Activated naive CD4-positive, alpha-beta T cell treated with anti-CD3 and anti-CD28 coated beads for 36 hours (primary cell): ENCODE measurements at regions of chr15 and their contacts with region 1.

Region 1: GRCh38 chr15:90320061-90320884 is 31.8 kb upstream of the ZNF774 start:
- DNase-seq: peak; percentile 75
- H3K4me3 Mint-ChIP-seq: no peak overlapping the region
- H3K27ac Mint-ChIP-seq: no peak overlapping the region
- H3K4me1 Mint-ChIP-seq: peaks cover 4% of the 10 kb centered on the region
- H3K27me3 Mint-ChIP-seq: no peaks in the 10 kb centered on the region

Region 2: GRCh38 chr15:89828241-89829082 is 491.8 kb before region 1 on chr15:
- CTCF ChIA-PET with region 1: no interaction called
- intact Hi-C with region 1: no loop called
- DNase-seq: no peak
- H3K4me3 Mint-ChIP-seq: no peak overlapping the region
- H3K27ac Mint-ChIP-seq: no peak overlapping the region
- H3K4me1 Mint-ChIP-seq: no peaks in the 10 kb centered on the region
- H3K27me3 Mint-ChIP-seq: peaks cover 2% of the 10 kb centered on the region

Region 3: GRCh38 chr15:90291679-90292356 is 28.5 kb before region 1 on chr15:
- CTCF ChIA-PET with region 1: interaction called, 21 read pairs
- intact Hi-C with region 1: loop called (anchors 2 kb)
- DNase-seq: peak; percentile 28
- H3K4me3 Mint-ChIP-seq: no peak overlapping the region
- H3K27ac Mint-ChIP-seq: no peak overlapping the region
- H3K4me1 Mint-ChIP-seq: peaks cover 6% of the 10 kb centered on the region
- H3K27me3 Mint-ChIP-seq: no peaks in the 10 kb centered on the region

Region 4: GRCh38 chr15:90306560-90306959 is 13.7 kb before region 1 on chr15:
- CTCF ChIA-PET with region 1: interaction called, 44 read pairs
- intact Hi-C with region 1: no loop called
- DNase-seq: peak; percentile 68
- H3K4me3 Mint-ChIP-seq: no peak overlapping the region
- H3K27ac Mint-ChIP-seq: no peak overlapping the region
- H3K4me1 Mint-ChIP-seq: peaks cover 29% of the 10 kb centered on the region
- H3K27me3 Mint-ChIP-seq: no peaks in the 10 kb centered on the region

Region 5: DNA sequence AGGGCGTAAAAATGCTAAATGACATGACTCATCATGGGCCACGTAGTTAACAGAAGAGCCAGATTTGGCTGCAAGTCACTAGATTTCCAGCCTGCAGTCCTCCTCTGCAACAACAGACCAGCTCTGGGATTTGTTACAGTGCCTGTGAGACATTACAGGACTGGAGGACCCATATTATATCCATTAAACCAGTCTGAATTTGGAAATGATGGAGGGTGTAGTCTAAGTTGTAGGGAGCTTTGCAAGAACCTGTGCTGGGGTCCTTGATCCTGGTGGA is 42.6 kb after region 1 on chr15:
- CTCF ChIA-PET with region 1: interaction called, 11 read pairs
- intact Hi-C with region 1: loop called (anchors 5 kb)
- DNase-seq: no peak
- H3K4me3 Mint-ChIP-seq: no peak overlapping the region
- H3K27ac Mint-ChIP-seq: no peak overlapping the region
- H3K4me1 Mint-ChIP-seq: peaks cover 21% of the 10 kb centered on the region
- H3K27me3 Mint-ChIP-seq: no peaks in the 10 kb centered on the region

Region 6: DNA sequence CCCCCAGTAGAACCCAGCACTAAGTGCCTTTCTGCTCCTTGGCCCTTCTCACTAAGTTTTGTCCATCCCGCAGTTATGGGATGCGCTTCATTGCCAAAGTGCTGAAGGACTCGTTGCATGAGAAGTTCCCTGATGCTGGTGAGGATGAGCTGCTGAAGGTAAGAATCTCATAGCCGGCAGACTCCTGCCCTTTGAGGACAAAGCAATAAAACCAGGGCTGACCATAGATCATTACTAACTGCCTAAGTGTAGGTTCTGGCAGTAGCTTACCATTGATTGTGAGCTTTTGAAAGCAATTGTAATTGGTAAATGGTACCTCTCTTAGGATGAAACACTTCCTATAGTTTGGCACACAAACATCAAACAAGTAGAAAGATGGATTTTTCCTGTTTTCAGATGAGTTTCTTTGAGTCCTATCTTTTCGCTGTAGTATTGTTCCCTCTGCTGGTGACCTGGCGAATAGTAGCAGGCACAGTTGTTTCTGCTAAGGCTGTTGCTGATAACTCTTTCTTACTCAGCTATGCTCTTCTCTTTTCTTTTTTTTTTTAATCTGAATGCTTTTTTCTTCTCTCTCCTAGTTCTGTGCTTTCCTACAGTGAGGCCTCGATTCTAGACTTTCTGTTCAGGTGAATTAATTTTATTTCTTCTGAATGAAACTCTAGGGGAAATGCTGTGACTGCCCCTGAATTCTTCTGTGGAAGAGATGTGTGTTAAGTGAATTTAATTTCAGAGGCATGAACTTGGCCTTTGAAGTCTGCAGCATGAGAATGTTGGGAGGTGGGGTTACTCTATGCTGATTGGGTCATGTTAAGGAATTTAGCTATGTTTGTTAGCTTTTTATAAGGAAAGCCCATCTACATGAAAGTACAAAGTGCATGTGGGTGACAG is 162.1 kb after region 1 on chr15:
- CTCF ChIA-PET with region 1: interaction called, 82 read pairs
- intact Hi-C with region 1: loop called (anchors 1 kb)
- DNase-seq: peak; percentile 74
- H3K4me3 Mint-ChIP-seq: no peak overlapping the region
- H3K27ac Mint-ChIP-seq: no peak overlapping the region
- H3K4me1 Mint-ChIP-seq: peaks cover 16% of the 10 kb centered on the region
- H3K27me3 Mint-ChIP-seq: no peaks in the 10 kb centered on the region

Region 7: GRCh38 chr15:90603893-90604292 is 283.6 kb after region 1 on chr15:
- CTCF ChIA-PET with region 1: interaction called, 6 read pairs
- intact Hi-C with region 1: loop called (anchors 1 kb)
- DNase-seq: peak; percentile 82
- H3K4me3 Mint-ChIP-seq: no peak overlapping the region
- H3K27ac Mint-ChIP-seq: no peak overlapping the region
- H3K4me1 Mint-ChIP-seq: peaks cover 42% of the 10 kb centered on the region
- H3K27me3 Mint-ChIP-seq: no peaks in the 10 kb centered on the region

Region 8: GRCh38 chr15:90686435-90687218 is 366.4 kb after region 1 on chr15:
- CTCF ChIA-PET with region 1: interaction called, 3 read pairs
- intact Hi-C with region 1: loop called (anchors 5 kb)
- DNase-seq: peak; percentile 65
- H3K4me3 Mint-ChIP-seq: no peak overlapping the region
- H3K27ac Mint-ChIP-seq: peak overlapping the region; percentile 92
- H3K4me1 Mint-ChIP-seq: peaks cover 24% of the 10 kb centered on the region
- H3K27me3 Mint-ChIP-seq: no peaks in the 10 kb centered on the region